ENCODE measurements at regions of chr11 and their contacts with region 1.

Region 1: GRCh38 chr11:112226062-112226830 is at the start of gene PTS:
- DNase-seq: peak; percentile 83
- H3K4me3 Mint-ChIP-seq: peak within 1 kb of the TSS; percentile 84
- H3K27ac Mint-ChIP-seq: peak within 1 kb of the TSS; percentile 91
- H3K4me1 Mint-ChIP-seq: peaks cover 29% of the 10 kb centered on the region
- H3K27me3 Mint-ChIP-seq: peaks cover 1% of the 10 kb centered on the region
- total RNA-seq, gene PTS: 28.9 and 35.0 TPM in 2 replicates

Region 2: DNA sequence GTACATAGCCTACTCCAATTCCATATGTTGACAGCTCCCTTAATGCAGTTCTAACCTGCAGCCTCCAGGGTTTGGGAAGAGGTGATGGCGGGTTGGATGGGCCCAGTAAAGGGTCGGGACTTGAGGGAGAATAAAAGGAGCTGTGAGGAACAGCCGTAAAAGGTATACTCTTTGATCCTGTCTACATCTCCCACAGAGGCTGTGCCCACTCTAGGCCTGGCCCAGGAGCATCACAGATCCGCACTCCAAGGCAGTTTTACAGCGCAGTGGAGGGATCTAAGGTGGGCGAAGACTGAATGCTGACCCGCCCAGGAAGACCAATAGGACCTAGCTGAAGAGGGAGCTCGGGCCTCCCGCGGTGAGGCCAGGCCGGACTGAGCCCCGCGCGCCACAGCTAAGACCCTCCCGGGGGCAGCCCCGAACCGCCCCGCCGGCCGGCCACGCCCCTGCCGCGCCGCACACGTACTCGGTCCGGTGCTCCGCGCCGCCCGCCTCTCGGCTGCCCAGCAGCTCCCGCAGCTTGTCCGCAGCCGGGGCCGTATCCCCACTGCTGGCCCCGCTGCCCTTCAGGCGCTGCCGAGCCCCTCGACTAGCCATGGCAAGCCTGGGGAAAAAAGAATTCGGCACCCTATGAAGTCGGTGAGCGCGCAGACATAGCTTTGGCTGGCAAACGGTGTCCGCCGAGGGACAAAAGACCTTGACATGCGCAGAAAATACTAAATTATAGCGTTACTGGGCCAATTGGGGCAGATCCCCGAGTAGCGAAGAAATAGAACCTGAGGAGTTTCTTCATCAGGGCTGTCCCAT is 355.2 kb before region 1 on chr11 and contains the start of gene ALG9:
- intact Hi-C with region 1: loop called (anchors 1 kb)
- DNase-seq: peak; percentile 85
- H3K4me3 Mint-ChIP-seq: peak within 1 kb of the TSS; percentile 89
- H3K27ac Mint-ChIP-seq: peak within 1 kb of the TSS; percentile 90
- H3K4me1 Mint-ChIP-seq: peaks cover 32% of the 10 kb centered on the region
- H3K27me3 Mint-ChIP-seq: no peaks in the 10 kb centered on the region
- total RNA-seq, gene ALG9: 29.3 and 31.8 TPM in 2 replicates

Region 3: GRCh38 chr11:111938687-111939160 is 287.5 kb before region 1 on chr11:
- intact Hi-C with region 1: loop called (anchors 5 kb)
- DNase-seq: peak; percentile 22
- H3K4me3 Mint-ChIP-seq: peak overlapping the region; percentile 88
- H3K27ac Mint-ChIP-seq: peak overlapping the region; percentile 92
- H3K4me1 Mint-ChIP-seq: peaks cover 58% of the 10 kb centered on the region
- H3K27me3 Mint-ChIP-seq: no peaks in the 10 kb centered on the region

Region 4: GRCh38 chr11:112280268-112281126 is 54.3 kb after region 1 on chr11:
- intact Hi-C with region 1: loop called (anchors 1 kb)
- DNase-seq: peak; percentile 64
- H3K4me3 Mint-ChIP-seq: peak overlapping the region; percentile 85
- H3K27ac Mint-ChIP-seq: peak overlapping the region; percentile 77
- H3K4me1 Mint-ChIP-seq: peaks cover 39% of the 10 kb centered on the region
- H3K27me3 Mint-ChIP-seq: peaks cover 4% of the 10 kb centered on the region

Region 5: GRCh38 chr11:112762707-112763090 is 536.5 kb after region 1 on chr11:
- intact Hi-C with region 1: no loop called
- DNase-seq: no peak
- H3K4me3 Mint-ChIP-seq: no peak overlapping the region
- H3K27ac Mint-ChIP-seq: no peak overlapping the region
- H3K4me1 Mint-ChIP-seq: no peaks in the 10 kb centered on the region
- H3K27me3 Mint-ChIP-seq: peaks cover 5% of the 10 kb centered on the region

Region 6: GRCh38 chr11:113314389-113315301 is 1088.4 kb after region 1 on chr11 and contains the start of gene TTC12:
- intact Hi-C with region 1: loop called (anchors 1 kb)
- DNase-seq: peak; percentile 89
- H3K4me3 Mint-ChIP-seq: peak within 1 kb of the TSS; percentile 81
- H3K27ac Mint-ChIP-seq: peak within 1 kb of the TSS; percentile 70
- H3K4me1 Mint-ChIP-seq: peaks cover 20% of the 10 kb centered on the region
- H3K27me3 Mint-ChIP-seq: no peaks in the 10 kb centered on the region
- total RNA-seq, gene TTC12: 7.4 and 8.5 TPM in 2 replicates